Transverse colon (tissue), 4 donors: ENCODE measurements at regions of chr1 and their contacts with region 1.

Region 1: DNA sequence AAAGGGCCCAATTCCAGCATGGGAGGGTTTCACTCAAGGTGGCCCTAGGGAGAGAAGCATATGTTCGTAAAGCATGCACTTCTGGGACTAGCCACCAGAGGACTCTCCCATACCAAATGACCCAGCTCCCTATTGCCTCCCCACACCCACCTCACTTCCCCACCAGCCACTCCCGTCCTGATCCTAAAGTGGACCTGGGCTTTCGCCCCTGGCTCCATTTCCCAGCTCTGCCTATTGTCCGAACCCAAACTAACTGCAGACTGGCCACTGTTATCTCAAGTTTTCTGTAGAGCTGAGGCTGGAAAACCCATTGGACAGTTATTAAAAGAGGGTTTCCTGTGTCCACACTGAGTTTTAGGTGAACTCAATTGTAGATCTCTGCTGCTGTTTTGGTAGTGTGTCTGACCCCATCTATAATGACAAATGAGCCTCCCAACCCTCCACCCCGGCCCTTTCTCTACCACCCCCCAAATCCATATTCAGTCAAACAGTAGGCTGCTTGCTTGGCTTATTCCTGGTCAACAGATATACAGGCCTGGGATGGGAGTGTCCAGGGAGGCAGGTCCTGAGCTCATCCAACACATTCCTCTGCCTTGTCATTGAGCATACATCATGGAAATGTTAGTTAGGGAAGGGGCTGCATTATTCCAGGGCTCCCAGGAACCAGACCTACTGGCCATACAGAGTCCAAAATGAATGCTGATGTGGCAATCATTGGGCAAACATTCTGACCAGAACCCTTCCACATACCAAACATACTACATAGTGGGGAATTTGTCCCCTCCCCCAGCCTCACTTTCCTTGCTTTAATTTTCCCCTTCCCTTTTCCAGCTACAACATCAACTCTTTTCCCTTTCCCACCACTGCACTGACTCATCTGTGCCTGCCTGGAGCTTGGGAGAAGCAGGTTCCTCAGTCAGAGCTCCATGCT is 59.2 kb downstream of the ABCA4 start:
- DNase-seq: peak; percentile 65
- H3K4me3 ChIP-seq: no peak overlapping the region
- H3K27ac ChIP-seq: no peak overlapping the region
- H3K4me1 ChIP-seq: peaks cover 0 to 11% (median 8%) of the 10 kb centered on the region in 4 donors
- H3K27me3 ChIP-seq: no peaks in the 10 kb centered on the region
- CTCF ChIP-seq: peak; percentile 86 to 94 (median 88)
- EP300 ChIP-seq: no peak
- POLR2A ChIP-seq: no peak

Region 2: DNA sequence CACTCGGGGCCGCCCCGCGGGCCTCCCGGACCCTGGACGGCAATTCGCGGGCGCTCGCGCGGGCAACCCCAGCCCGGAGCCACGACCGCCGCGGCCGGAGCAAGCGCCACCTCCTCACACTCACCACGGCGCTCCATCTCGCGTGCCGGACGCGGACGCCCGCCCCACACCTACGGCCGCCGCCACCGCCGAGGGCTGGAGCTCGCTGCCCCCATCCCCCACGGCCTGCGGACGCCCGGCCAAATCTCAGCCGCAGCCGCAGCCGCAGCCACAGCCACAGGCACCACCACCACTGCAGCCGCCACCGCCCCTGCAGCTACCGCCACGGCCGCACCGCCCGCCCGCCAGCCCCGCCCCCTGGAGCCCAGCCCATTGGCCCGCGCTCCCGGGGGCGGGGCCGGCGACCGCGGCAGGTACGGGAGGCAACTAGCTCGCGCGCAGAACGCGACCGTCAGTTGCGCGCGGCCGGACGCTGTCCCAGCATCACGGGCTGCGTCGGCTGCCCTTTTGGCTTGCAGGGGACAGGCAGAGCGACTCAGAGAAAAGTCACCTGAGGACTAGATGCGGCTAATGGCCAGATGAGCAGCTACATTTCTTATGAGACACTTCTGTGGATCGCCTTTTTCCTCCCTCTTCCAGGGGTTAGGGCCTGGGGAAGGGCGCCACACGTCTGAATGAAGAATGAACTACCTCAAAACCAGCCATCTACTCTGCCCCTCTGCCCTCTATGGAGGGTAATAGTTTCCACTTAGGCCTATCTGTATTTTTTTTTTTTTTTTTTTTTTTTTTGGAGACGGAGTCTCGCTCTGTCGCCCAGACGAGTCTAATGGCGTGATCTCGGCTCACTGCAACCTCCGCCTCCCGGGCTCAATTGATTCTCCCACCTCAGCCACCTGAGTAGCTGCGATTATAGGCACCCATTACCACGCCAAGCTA is 175.8 kb after region 1 on chr1 and contains the start of gene ARHGAP29:
- in situ Hi-C with region 1: loop called in 1 of 4 experiments (anchors 25 kb)
- intact Hi-C with region 1: loop called (anchors 10 kb)
- DNase-seq: peak; percentile 83
- H3K4me3 ChIP-seq: peak within 1 kb of the TSS; percentile 62 to 85 (median 68)
- H3K27ac ChIP-seq: peak within 1 kb of the TSS; percentile 77 to 81 (median 78)
- H3K4me1 ChIP-seq: peaks cover 0 to 18% (median 7%) of the 10 kb centered on the region in 4 donors
- H3K27me3 ChIP-seq: peaks cover 92% of the 10 kb centered on the region
- CTCF ChIP-seq: no peak
- EP300 ChIP-seq: no peak
- POLR2A ChIP-seq: peak; percentile 33
- total RNA-seq, gene ARHGAP29: 4.1 to 8.9 (median 5.4) TPM

Region 3: DNA sequence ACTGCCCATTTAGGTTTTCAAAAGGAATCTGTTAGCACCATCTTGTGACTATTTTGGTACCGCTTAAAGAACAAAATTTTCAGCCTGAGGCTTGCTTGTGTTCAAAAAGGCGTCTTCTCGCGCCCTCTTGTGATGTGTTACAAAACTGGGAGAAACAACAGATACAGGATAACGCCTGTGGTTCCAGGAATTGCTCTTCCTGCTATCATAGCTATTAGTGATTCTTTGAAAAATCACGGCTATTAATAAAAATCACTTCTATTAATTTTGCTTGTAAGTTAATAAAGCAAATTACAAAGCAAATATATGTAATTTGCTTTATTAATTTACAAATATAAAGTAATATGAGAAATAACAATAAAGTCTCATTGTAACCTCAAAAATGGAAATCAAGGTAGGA is 274.2 kb after region 1 on chr1:
- in situ Hi-C with region 1: loop called (anchors 5 to 10 kb)
- intact Hi-C with region 1: loop called (anchors 1 kb)
- DNase-seq: peak; percentile 70
- H3K4me3 ChIP-seq: no peak overlapping the region
- H3K27ac ChIP-seq: no peak overlapping the region
- H3K4me1 ChIP-seq: no peaks in the 10 kb centered on the region
- H3K27me3 ChIP-seq: no peaks in the 10 kb centered on the region
- CTCF ChIP-seq: peak; percentile 71 to 94 (median 74)
- EP300 ChIP-seq: no peak
- POLR2A ChIP-seq: no peak

Region 4: GRCh38 chr1:94342405-94342804 is 280.6 kb after region 1 on chr1:
- in situ Hi-C with region 1: loop called (anchors 5 to 10 kb)
- intact Hi-C with region 1: no loop called
- DNase-seq: no peak
- H3K4me3 ChIP-seq: no peak overlapping the region
- H3K27ac ChIP-seq: no peak overlapping the region
- H3K4me1 ChIP-seq: no peaks in the 10 kb centered on the region
- H3K27me3 ChIP-seq: no peaks in the 10 kb centered on the region
- CTCF ChIP-seq: no peak
- EP300 ChIP-seq: no peak
- POLR2A ChIP-seq: no peak

Region 5: GRCh38 chr1:94463765-94464330 is 402.1 kb after region 1 on chr1:
- in situ Hi-C with region 1: loop called in 2 of 4 experiments (anchors 10 to 25 kb)
- intact Hi-C with region 1: no loop called
- DNase-seq: no peak
- H3K4me3 ChIP-seq: no peak overlapping the region
- H3K27ac ChIP-seq: peak overlapping the region; percentile 38 to 69 (median 60)
- H3K4me1 ChIP-seq: peaks cover 7 to 31% (median 18%) of the 10 kb centered on the region in 4 donors
- H3K27me3 ChIP-seq: no peaks in the 10 kb centered on the region
- CTCF ChIP-seq: peak; percentile 50 to 71 (median 57)
- EP300 ChIP-seq: no peak
- POLR2A ChIP-seq: no peak

Region 6: DNA sequence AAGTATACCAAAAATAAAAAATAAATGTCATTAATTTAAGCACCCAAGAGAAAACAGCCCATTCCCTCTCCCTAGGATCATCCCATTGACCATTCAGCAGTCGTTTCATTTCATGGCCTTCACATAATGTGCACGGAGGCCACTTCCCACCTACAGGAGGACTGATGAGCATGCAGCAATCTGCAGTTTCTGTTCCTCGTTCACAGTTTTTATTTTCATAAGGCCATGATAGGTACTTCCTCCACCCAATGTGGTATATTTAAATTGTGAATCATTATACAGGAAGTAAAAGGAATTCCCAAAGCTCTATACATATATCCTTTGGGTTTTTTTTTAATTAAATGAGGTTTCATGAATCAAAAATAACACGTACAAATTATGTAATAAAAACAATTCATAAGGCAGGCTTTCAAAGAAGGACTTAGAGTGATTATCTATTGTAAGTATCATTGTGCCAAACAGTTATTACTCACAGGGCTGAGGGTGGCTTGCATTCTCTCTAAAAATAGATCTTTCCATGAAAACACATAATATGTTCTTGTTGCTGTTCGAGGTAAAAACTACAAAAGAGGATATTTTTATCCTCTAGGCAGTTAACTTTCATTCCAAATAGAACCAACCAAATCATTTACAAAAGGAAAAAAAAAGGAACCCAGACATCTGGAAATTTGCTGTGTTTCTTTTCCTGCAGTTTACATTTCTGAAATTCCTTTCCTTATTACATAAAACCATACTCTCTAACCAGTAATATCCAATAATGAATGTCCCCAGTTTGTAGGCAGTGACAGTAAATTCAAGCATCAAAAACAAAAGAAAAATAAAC is 730.9 kb after region 1 on chr1:
- in situ Hi-C with region 1: loop called in 1 of 4 experiments (anchors 25 kb)
- intact Hi-C with region 1: no loop called
- DNase-seq: peak; percentile 20
- H3K4me3 ChIP-seq: no peak overlapping the region
- H3K27ac ChIP-seq: peak overlapping the region; percentile 68 to 81 (median 71)
- H3K4me1 ChIP-seq: peaks cover 0 to 22% (median 12%) of the 10 kb centered on the region in 4 donors
- H3K27me3 ChIP-seq: no peaks in the 10 kb centered on the region
- CTCF ChIP-seq: peak in 4 of 5 experiments; percentile 24 to 56 (median 42)
- EP300 ChIP-seq: no peak
- POLR2A ChIP-seq: no peak

Region 7: DNA sequence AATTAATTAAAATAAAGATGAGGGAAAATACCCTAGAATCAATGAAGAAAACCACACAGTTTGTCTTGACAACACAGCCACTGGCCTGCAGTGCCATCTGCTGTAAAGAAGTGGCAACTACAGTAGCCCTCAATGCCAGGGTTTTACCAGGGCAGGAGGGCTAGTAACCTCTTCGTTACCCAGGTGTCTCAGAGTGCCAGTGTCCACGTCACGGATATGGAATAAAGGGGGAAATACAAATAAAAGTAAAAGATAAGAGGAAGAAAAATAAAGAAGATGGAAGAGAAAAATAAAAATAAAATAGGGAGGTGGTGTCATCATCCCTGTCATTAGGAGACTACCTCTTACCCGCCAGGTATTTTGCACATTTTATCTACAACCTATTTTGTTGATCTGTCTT is 744.1 kb after region 1 on chr1:
- in situ Hi-C with region 1: loop called in 2 of 4 experiments (anchors 25 kb)
- intact Hi-C with region 1: no loop called
- DNase-seq: peak; percentile 55
- H3K4me3 ChIP-seq: no peak overlapping the region
- H3K27ac ChIP-seq: peak overlapping the region; percentile 44 to 75 (median 66)
- H3K4me1 ChIP-seq: peaks cover 27 to 82% (median 53%) of the 10 kb centered on the region in 4 donors
- H3K27me3 ChIP-seq: no peaks in the 10 kb centered on the region
- CTCF ChIP-seq: peak; percentile 97 to 100 (median 99)
- EP300 ChIP-seq: no peak
- POLR2A ChIP-seq: no peak